ENCODE measurements at regions of chr22 and their contacts with region 1.

Region 1: GRCh38 chr22:33519071-33519973 is 401.0 kb downstream of the LARGE1 start:
- DNase-seq: peak; percentile 88
- ATAC-seq: peak; percentile 53
- H3K4me3 ChIP-seq: peak overlapping the region in 3 of 5 experiments; percentile 6 to 48 (median 7)
- H3K4me3 Mint-ChIP-seq: peak overlapping the region; percentile 75
- H3K27ac ChIP-seq: peak overlapping the region; percentile 38 to 75
- H3K27ac Mint-ChIP-seq: peak overlapping the region; percentile 87
- H3K4me1 ChIP-seq: peaks cover 52 to 55% of the 10 kb centered on the region in 2 donors
- H3K4me1 Mint-ChIP-seq: peaks cover 53% of the 10 kb centered on the region
- H3K27me3 ChIP-seq: no peaks in the 10 kb centered on the region
- H3K27me3 Mint-ChIP-seq: no peaks in the 10 kb centered on the region
- CTCF ChIP-seq: peak; percentile 79

Region 2: GRCh38 chr22:33529424-33530113 is 10.2 kb after region 1 on chr22:
- CTCF ChIA-PET with region 1: interaction called, 23 read pairs
- POLR2A ChIA-PET with region 1: no interaction called
- intact Hi-C with region 1: no loop called
- DNase-seq: no peak
- ATAC-seq: no peak
- H3K4me3 ChIP-seq: no peak overlapping the region
- H3K4me3 Mint-ChIP-seq: no peak overlapping the region
- H3K27ac ChIP-seq: no peak overlapping the region
- H3K27ac Mint-ChIP-seq: no peak overlapping the region
- H3K4me1 ChIP-seq: peaks cover 3 to 5% of the 10 kb centered on the region in 2 donors
- H3K4me1 Mint-ChIP-seq: peaks cover 25% of the 10 kb centered on the region
- H3K27me3 ChIP-seq: no peaks in the 10 kb centered on the region
- H3K27me3 Mint-ChIP-seq: no peaks in the 10 kb centered on the region
- CTCF ChIP-seq: no peak

Region 3: GRCh38 chr22:33565580-33565995 is 46.3 kb after region 1 on chr22:
- CTCF ChIA-PET with region 1: interaction called, 185 read pairs
- POLR2A ChIA-PET with region 1: interaction called, 28 read pairs
- intact Hi-C with region 1: loop called (anchors 1 kb)
- DNase-seq: no peak
- ATAC-seq: no peak
- H3K4me3 ChIP-seq: no peak overlapping the region
- H3K4me3 Mint-ChIP-seq: peak overlapping the region; percentile 18
- H3K27ac ChIP-seq: no peak overlapping the region
- H3K27ac Mint-ChIP-seq: peak overlapping the region; percentile 67
- H3K4me1 ChIP-seq: peaks cover 70 to 73% of the 10 kb centered on the region in 2 donors
- H3K4me1 Mint-ChIP-seq: peaks cover 72% of the 10 kb centered on the region
- H3K27me3 ChIP-seq: no peaks in the 10 kb centered on the region
- H3K27me3 Mint-ChIP-seq: no peaks in the 10 kb centered on the region
- CTCF ChIP-seq: no peak

Region 4: GRCh38 chr22:33579448-33580093 is 60.2 kb after region 1 on chr22:
- CTCF ChIA-PET with region 1: interaction called, 258 read pairs
- POLR2A ChIA-PET with region 1: interaction called, 11 read pairs
- intact Hi-C with region 1: loop called (anchors 1 kb)
- DNase-seq: peak; percentile 79
- ATAC-seq: peak; percentile 69
- H3K4me3 ChIP-seq: no peak overlapping the region
- H3K4me3 Mint-ChIP-seq: peak overlapping the region; percentile 61
- H3K27ac ChIP-seq: peak overlapping the region; percentile 48 to 72
- H3K27ac Mint-ChIP-seq: peak overlapping the region; percentile 86
- H3K4me1 ChIP-seq: peaks cover 46 to 52% of the 10 kb centered on the region in 2 donors
- H3K4me1 Mint-ChIP-seq: peaks cover 51% of the 10 kb centered on the region
- H3K27me3 ChIP-seq: no peaks in the 10 kb centered on the region
- H3K27me3 Mint-ChIP-seq: no peaks in the 10 kb centered on the region
- CTCF ChIP-seq: peak; percentile 98

Region 5: GRCh38 chr22:34111210-34111824 is 592.0 kb after region 1 on chr22:
- CTCF ChIA-PET with region 1: interaction called, 27 read pairs
- POLR2A ChIA-PET with region 1: interaction called, 6 read pairs
- intact Hi-C with region 1: loop called (anchors 1 kb)
- DNase-seq: peak; percentile 63
- ATAC-seq: peak; percentile 64
- H3K4me3 ChIP-seq: no peak overlapping the region
- H3K4me3 Mint-ChIP-seq: no peak overlapping the region
- H3K27ac ChIP-seq: no peak overlapping the region
- H3K27ac Mint-ChIP-seq: no peak overlapping the region
- H3K4me1 ChIP-seq: no peaks in the 10 kb centered on the region
- H3K4me1 Mint-ChIP-seq: no peaks in the 10 kb centered on the region
- H3K27me3 ChIP-seq: no peaks in the 10 kb centered on the region
- H3K27me3 Mint-ChIP-seq: peaks cover 12% of the 10 kb centered on the region
- CTCF ChIP-seq: peak; percentile 84